GM12878 (cell line): ENCODE measurements at regions of chr1 and their contacts with region 1.

Region 1: DNA sequence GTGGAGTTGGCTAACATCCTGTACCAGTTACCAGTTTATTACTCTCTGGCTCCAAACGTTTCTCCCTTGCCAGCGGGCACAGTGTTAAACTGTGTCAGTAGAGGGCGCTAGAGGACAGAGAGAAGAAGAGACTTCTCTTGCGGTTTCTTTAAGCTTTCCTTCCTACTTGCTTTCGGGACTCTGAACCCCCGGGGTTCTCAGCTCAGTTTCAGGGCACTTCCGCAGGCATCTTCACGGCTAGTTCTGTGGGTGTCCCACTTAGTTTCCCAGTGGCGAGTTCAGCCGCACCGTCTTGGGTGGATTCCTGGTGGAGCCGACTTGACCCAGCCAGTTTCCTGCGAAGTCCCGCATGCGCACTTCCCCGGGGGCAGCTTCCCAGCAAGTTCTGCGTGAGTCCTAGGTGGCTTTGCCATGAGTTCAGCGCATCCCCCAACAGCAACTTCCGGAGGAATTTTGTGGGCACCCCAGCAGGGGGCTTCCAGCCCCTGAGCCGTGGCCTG is 37.9 kb upstream of the BTG2 start:
- DNase-seq: no peak
- ATAC-seq: peak; percentile 70
- H3K4me3 ChIP-seq: peak overlapping the region; percentile 61; the same call in 1 of the 2 replicates
- H3K27ac ChIP-seq: peak overlapping the region; percentile 47
- H3K4me1 ChIP-seq: peaks cover 7% of the 10 kb centered on the region
- H3K27me3 ChIP-seq: no peaks in the 10 kb centered on the region; a peak in 1 of 4 replicates
- CTCF ChIP-seq: peak; percentile 89 to 97 (median 91)
- EP300 ChIP-seq: no peak
- POLR2A ChIP-seq: no peak
- RAD21 ChIP-seq: peak; percentile 95

Region 2: DNA sequence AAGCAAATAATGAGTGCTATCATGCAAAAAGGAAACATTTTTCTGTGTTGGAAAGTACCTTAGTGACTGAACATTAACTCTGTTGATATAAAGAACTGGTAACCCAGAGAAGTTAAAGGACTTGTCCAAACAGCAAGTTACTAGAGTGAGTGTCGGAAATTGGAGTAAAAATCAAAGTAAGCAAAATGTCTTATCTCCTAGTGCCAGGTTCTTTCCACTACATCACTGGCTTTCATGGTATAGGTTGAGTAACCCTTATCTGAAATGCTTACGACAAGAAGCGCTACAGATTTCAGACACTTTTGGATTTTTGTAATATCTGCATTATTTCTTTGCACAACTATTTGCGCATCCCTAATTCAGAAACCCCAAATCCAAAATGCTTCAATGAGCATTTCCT is 362.1 kb before region 1 on chr1:
- CTCF ChIA-PET with region 1: no interaction called
- POLR2A ChIA-PET with region 1: no interaction called
- RAD21 ChIA-PET with region 1: no interaction called
- SMC1A ChIA-PET with region 1: no interaction called
- in situ Hi-C with region 1: no loop called
- intact Hi-C with region 1: no loop called
- DNase-seq: no peak
- ATAC-seq: no peak
- H3K4me3 ChIP-seq: no peak overlapping the region
- H3K27ac ChIP-seq: no peak overlapping the region
- H3K4me1 ChIP-seq: no peaks in the 10 kb centered on the region
- H3K27me3 ChIP-seq: no peaks in the 10 kb centered on the region
- CTCF ChIP-seq: no peak
- EP300 ChIP-seq: no peak
- POLR2A ChIP-seq: no peak
- RAD21 ChIP-seq: no peak

Region 3: GRCh38 chr1:203117611-203118575 is 149.5 kb before region 1 on chr1:
- CTCF ChIA-PET with region 1: interaction called, 32 read pairs
- POLR2A ChIA-PET with region 1: no interaction called
- RAD21 ChIA-PET with region 1: interaction called, 13 read pairs
- SMC1A ChIA-PET with region 1: interaction called, 8 read pairs
- in situ Hi-C with region 1: no loop called
- intact Hi-C with region 1: no loop called
- DNase-seq: no peak
- ATAC-seq: peak; percentile 96
- H3K4me3 ChIP-seq: no peak overlapping the region
- H3K27ac ChIP-seq: no peak overlapping the region
- H3K4me1 ChIP-seq: no peaks in the 10 kb centered on the region
- H3K27me3 ChIP-seq: peaks cover 6 to 9% of the 10 kb centered on the region in 2 experiments; a peak in 3 of 4 replicates
- CTCF ChIP-seq: peak; percentile 28 to 72 (median 64)
- EP300 ChIP-seq: no peak
- POLR2A ChIP-seq: no peak
- RAD21 ChIP-seq: peak; percentile 47

Region 4: GRCh38 chr1:203216274-203217138 is 50.9 kb before region 1 on chr1:
- CTCF ChIA-PET with region 1: interaction called, 73 read pairs
- POLR2A ChIA-PET with region 1: no interaction called
- RAD21 ChIA-PET with region 1: interaction called, 34 read pairs
- SMC1A ChIA-PET with region 1: interaction called, 13 read pairs
- in situ Hi-C with region 1: no loop called
- intact Hi-C with region 1: no loop called
- DNase-seq: peak; percentile 17
- ATAC-seq: peak; percentile 92
- H3K4me3 ChIP-seq: no peak overlapping the region
- H3K27ac ChIP-seq: no peak overlapping the region
- H3K4me1 ChIP-seq: no peaks in the 10 kb centered on the region
- H3K27me3 ChIP-seq: peaks cover 0 to 5% of the 10 kb centered on the region in 2 experiments; a peak in 1 of 4 replicates
- CTCF ChIP-seq: peak; percentile 63 to 90 (median 64); a peak in 5 of 6 replicates
- EP300 ChIP-seq: no peak
- POLR2A ChIP-seq: no peak
- RAD21 ChIP-seq: peak; percentile 78

Region 5: DNA sequence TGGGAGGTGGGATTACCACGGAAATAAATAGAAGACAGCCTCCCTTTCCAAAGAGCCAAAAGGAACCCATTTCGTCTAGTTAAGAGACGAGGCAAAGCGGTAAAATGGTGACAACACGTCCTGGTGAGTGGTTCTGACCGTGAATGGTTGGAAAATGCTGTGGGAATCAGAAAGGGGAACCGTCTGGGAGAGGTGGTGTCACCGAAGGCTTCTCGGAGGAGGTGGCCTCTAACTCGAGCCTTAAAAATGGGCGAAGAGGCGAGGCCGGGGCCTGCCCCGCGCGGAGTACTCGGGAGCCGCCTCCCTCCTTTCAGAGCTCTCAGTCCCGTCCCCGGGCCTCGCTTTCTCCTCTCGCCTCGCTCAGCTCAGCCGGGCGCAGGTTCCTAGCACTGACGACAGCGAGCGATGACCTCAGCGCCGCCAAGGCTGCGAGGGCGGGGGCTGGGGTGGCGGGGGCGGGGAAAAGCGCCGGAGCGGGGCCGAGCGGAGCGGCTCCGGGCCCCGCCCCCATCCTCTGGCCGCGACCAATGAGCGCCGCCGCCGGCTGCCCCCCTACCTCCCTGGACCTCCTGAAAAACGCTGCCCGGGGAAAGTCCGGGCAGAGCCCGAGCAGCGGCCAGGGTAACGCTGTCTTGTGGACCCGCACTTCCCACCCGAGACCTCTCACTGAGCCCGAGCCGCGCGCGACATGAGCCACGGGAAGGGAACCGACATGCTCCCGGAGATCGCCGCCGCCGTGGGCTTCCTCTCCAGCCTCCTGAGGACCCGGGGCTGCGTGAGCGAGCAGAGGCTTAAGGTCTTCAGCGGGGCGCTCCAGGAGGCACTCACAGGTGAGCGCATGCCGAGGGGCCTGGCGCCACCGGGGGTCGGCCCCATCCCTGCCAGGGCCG is 37.8 kb after region 1 on chr1 and contains the start of gene BTG2:
- CTCF ChIA-PET with region 1: interaction called, 70 read pairs
- POLR2A ChIA-PET with region 1: interaction called, 5 read pairs
- RAD21 ChIA-PET with region 1: interaction called, 470 read pairs
- SMC1A ChIA-PET with region 1: interaction called, 183 read pairs
- in situ Hi-C with region 1: no loop called
- intact Hi-C with region 1: no loop called
- DNase-seq: no peak
- ATAC-seq: peak; percentile 82
- H3K4me3 ChIP-seq: peak within 1 kb of the TSS; percentile 97
- H3K27ac ChIP-seq: peak within 1 kb of the TSS; percentile 91
- H3K4me1 ChIP-seq: peaks cover 38% of the 10 kb centered on the region
- H3K27me3 ChIP-seq: no peaks in the 10 kb centered on the region
- CTCF ChIP-seq: no peak
- EP300 ChIP-seq: no peak
- POLR2A ChIP-seq: peak; percentile 98
- RAD21 ChIP-seq: 0 out of 2 replicates have a peak, but pooled peaks have one; percentile 8
- polyA plus RNA-seq, gene BTG2: 23.3 to 37.2 TPM

Region 6: DNA sequence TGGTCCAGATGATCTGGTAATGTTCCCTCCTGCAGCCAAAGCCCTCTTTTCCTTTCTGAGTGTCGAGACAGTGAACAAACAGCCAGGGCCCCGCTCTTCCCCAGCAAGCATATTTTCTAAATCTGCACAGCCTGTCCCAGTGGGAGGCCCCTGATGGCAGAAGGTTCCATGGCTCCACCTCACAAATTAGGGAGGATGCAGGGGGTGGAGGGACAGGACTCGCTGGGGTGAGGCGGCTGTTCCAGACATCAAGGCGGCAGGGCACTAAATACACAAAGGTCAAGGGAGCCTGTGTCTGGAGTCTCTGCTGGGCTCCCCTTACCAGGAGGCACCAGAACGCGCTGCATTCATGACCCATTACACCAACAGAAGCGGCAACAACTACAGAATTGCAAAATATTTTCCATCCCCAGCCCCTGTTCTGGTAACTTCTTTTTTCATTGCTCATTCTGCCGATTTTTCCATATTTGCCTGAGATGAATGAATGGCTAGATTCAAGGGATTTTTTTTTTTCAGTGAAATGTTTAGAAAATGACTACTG is 181.2 kb after region 1 on chr1:
- CTCF ChIA-PET with region 1: interaction called, 82 read pairs
- POLR2A ChIA-PET with region 1: interaction called, 3 read pairs
- RAD21 ChIA-PET with region 1: interaction called, 3 read pairs
- SMC1A ChIA-PET with region 1: interaction called, 27 read pairs
- in situ Hi-C with region 1: loop called (anchors 5 kb)
- intact Hi-C with region 1: loop called (anchors 5 kb)
- DNase-seq: no peak
- ATAC-seq: no peak
- H3K4me3 ChIP-seq: no peak overlapping the region
- H3K27ac ChIP-seq: no peak overlapping the region
- H3K4me1 ChIP-seq: peaks cover 2% of the 10 kb centered on the region; the same call in 1 of the 2 replicates
- H3K27me3 ChIP-seq: no peaks in the 10 kb centered on the region
- CTCF ChIP-seq: no peak
- EP300 ChIP-seq: no peak
- POLR2A ChIP-seq: no peak
- RAD21 ChIP-seq: no peak

Region 7: GRCh38 chr1:203480525-203481084 is 213.2 kb after region 1 on chr1:
- CTCF ChIA-PET with region 1: interaction called, 19 read pairs
- POLR2A ChIA-PET with region 1: no interaction called
- RAD21 ChIA-PET with region 1: interaction called, 11 read pairs
- SMC1A ChIA-PET with region 1: interaction called, 4 read pairs
- in situ Hi-C with region 1: loop called (anchors 5 kb)
- intact Hi-C with region 1: no loop called
- DNase-seq: no peak
- ATAC-seq: peak; percentile 50
- H3K4me3 ChIP-seq: no peak overlapping the region
- H3K27ac ChIP-seq: no peak overlapping the region
- H3K4me1 ChIP-seq: peaks cover 9% of the 10 kb centered on the region; the same call in 1 of the 2 replicates
- H3K27me3 ChIP-seq: peaks cover 0 to 2% of the 10 kb centered on the region in 2 experiments; a peak in 1 of 4 replicates
- CTCF ChIP-seq: 0 out of 6 replicates have a peak, but pooled peaks of 1 of the 3 experiments have one; percentile 0
- EP300 ChIP-seq: no peak
- POLR2A ChIP-seq: no peak
- RAD21 ChIP-seq: no peak

Region 8: GRCh38 chr1:203702130-203702577 is 434.8 kb after region 1 on chr1:
- CTCF ChIA-PET with region 1: interaction called, 13 read pairs
- POLR2A ChIA-PET with region 1: no interaction called
- RAD21 ChIA-PET with region 1: no interaction called
- SMC1A ChIA-PET with region 1: interaction called, 4 read pairs
- in situ Hi-C with region 1: loop called (anchors 5 kb)
- intact Hi-C with region 1: loop called (anchors 1 kb)
- DNase-seq: peak; percentile 40
- ATAC-seq: peak; percentile 92
- H3K4me3 ChIP-seq: no peak overlapping the region
- H3K27ac ChIP-seq: no peak overlapping the region
- H3K4me1 ChIP-seq: no peaks in the 10 kb centered on the region; the same call in 1 of the 2 replicates
- H3K27me3 ChIP-seq: 0 out of 4 replicates have a peak, but pooled peaks cover 0 to 2% of the 10 kb centered on the region in 2 experiments
- CTCF ChIP-seq: peak; percentile 77 to 89 (median 88)
- EP300 ChIP-seq: no peak
- POLR2A ChIP-seq: no peak
- RAD21 ChIP-seq: peak; percentile 94